Left colon (tissue), 2 donors: ENCODE measurements at regions of chr9 and their contacts with region 1.

Region 1: GRCh38 chr9:35267710-35268109 is 105.9 kb downstream of the UNC13B start:
- DNase-seq: no peak
- ATAC-seq: no peak

Region 2: DNA sequence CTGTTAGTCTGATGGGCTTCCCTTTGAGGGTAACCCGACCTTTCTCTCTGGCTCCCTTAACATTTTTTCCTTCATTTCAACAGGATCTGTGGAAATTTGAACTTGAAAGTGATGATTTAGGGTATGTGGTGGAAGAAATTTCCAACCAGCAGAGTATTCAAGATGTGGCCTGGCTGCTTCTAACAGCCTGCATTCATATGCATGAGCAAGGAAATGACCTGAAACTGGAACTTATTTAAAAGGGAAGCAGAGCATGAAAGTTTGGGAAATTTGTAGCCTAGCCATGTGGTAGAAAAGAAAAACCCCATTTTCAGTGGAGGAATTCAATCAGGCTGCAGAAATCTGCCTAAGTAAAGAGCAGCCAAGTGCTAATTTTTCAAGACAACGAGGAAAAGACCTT is 64.2 kb before region 1 on chr9:
- intact Hi-C with region 1: no loop called
- DNase-seq: no peak
- ATAC-seq: no peak

Region 3: GRCh38 chr9:35470894-35471293 is 203.2 kb after region 1 on chr9:
- intact Hi-C with region 1: loop called in 1 of 2 experiments (anchors 10 kb)
- DNase-seq: no peak
- ATAC-seq: no peak